CD4-positive, alpha-beta memory T cell (primary cell): ENCODE measurements at regions of chr3 and their contacts with region 1.

Region 1: DNA sequence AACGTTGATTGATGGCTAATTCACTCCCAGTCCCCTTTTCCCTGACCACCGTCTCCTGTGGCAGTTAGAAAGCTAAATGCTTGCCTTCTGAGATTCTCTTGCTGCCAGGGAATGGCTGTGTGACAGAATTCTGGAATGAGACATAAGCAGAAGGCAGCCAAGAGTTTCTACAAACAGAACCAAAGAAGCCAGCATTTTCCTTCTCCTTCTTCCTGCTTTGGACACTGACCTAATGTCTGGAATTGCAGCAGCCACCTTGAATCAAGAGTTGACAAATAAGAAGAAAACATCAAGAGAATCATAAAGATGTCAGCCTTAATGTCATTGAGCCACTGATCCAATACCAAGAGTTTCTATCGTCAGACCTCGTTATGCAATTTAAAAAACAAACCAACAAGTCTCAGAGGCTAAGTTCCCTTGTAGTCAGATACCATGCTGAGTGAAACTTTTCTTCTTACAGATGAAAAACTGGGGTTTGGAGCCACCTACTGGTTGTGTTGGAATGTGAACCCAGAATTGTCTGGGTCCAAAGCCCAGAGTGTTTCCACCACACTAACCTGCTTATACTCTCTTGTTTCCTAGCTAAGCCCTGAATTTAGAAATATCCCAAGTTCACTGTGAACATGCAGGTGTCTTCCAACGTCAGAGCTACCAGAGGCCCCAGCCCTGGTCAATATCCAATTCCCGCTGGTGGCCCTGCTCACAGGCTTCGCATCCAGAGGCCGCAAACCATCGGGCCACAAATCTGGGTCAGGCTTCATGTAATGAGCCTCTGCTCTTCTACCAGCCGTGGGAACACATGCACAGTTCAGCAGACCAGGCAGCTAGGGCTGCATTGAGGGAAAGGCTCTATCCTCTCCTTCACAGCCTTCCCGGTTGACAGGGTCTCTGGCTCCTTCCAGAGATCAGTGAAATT is 42.5 kb downstream of the MCF2L2 start:
- DNase-seq: peak; percentile 54 to 63 (median 55)
- H3K4me3 ChIP-seq: no peak overlapping the region
- H3K4me3 Mint-ChIP-seq: no peak overlapping the region
- H3K27ac ChIP-seq: no peak overlapping the region
- H3K27ac Mint-ChIP-seq: peak overlapping the region in 3 of 7 donors; percentile 6 to 83 (median 11)
- H3K4me1 ChIP-seq: no peaks in the 10 kb centered on the region
- H3K4me1 Mint-ChIP-seq: peaks cover 2 to 6% (median 4%) of the 10 kb centered on the region in 4 donors
- H3K27me3 ChIP-seq: no peaks in the 10 kb centered on the region
- H3K27me3 Mint-ChIP-seq: no peaks in the 10 kb centered on the region

Region 2: DNA sequence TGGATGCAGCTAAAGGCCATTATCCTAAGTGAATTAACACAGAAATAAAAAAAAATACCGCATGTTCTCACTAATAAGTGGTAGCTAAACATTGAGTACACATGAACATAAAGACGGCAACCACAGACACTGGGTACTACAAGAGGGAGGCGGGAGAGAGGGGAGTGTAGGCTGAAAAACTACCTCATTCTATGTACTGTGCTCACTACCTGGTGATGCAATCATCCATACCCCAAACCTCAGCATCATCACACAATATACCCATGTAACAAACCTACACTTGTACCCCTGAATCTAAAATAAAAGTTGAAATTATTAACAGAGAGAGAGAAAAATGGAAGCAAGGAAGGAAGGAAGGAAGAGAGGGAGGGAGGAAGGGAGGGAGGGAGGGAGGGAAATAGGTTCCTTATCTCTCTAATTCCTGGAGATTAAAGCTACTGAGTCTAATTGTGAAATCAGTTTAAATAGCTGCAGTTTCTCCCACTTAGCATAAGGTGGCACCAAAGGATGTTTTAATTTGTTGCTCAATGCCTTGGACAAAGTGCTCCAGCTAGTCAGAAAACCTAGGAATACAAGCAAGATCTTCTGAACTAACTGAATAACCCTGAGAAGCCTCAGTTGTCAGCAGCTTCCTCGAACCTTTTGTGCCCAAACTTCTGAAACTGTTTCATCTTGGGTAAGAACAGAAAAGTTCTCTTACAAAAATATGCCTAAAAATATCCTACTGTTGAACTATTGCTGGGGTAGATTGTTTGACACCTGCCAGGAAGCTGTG is 672.0 kb before region 1 on chr3:
- CTCF ChIA-PET with region 1: interaction called, 12 read pairs
- POLR2A ChIA-PET with region 1: no interaction called
- intact Hi-C with region 1: loop called (anchors 1 kb)
- DNase-seq: peak in 4 of 5 donors; percentile 25 to 41 (median 28)
- H3K4me3 ChIP-seq: no peak overlapping the region
- H3K4me3 Mint-ChIP-seq: no peak overlapping the region
- H3K27ac ChIP-seq: no peak overlapping the region
- H3K27ac Mint-ChIP-seq: no peak overlapping the region
- H3K4me1 ChIP-seq: no peaks in the 10 kb centered on the region
- H3K4me1 Mint-ChIP-seq: peaks cover 0 to 2% (median under 1%) of the 10 kb centered on the region in 4 donors
- H3K27me3 ChIP-seq: no peaks in the 10 kb centered on the region
- H3K27me3 Mint-ChIP-seq: no peaks in the 10 kb centered on the region

Region 3: GRCh38 chr3:183122257-183122932 is 263.6 kb before region 1 on chr3:
- CTCF ChIA-PET with region 1: interaction called, 163 read pairs
- POLR2A ChIA-PET with region 1: interaction called, 3 read pairs
- intact Hi-C with region 1: loop called (anchors 1 kb)
- DNase-seq: peak in 4 of 5 donors; percentile 53 to 55 (median 54)
- H3K4me3 ChIP-seq: no peak overlapping the region
- H3K4me3 Mint-ChIP-seq: no peak overlapping the region
- H3K27ac ChIP-seq: no peak overlapping the region
- H3K27ac Mint-ChIP-seq: no peak overlapping the region
- H3K4me1 ChIP-seq: no peaks in the 10 kb centered on the region
- H3K4me1 Mint-ChIP-seq: no peaks in the 10 kb centered on the region
- H3K27me3 ChIP-seq: no peaks in the 10 kb centered on the region
- H3K27me3 Mint-ChIP-seq: peaks cover 0 to 2% of the 10 kb centered on the region in 2 donors

Region 4: DNA sequence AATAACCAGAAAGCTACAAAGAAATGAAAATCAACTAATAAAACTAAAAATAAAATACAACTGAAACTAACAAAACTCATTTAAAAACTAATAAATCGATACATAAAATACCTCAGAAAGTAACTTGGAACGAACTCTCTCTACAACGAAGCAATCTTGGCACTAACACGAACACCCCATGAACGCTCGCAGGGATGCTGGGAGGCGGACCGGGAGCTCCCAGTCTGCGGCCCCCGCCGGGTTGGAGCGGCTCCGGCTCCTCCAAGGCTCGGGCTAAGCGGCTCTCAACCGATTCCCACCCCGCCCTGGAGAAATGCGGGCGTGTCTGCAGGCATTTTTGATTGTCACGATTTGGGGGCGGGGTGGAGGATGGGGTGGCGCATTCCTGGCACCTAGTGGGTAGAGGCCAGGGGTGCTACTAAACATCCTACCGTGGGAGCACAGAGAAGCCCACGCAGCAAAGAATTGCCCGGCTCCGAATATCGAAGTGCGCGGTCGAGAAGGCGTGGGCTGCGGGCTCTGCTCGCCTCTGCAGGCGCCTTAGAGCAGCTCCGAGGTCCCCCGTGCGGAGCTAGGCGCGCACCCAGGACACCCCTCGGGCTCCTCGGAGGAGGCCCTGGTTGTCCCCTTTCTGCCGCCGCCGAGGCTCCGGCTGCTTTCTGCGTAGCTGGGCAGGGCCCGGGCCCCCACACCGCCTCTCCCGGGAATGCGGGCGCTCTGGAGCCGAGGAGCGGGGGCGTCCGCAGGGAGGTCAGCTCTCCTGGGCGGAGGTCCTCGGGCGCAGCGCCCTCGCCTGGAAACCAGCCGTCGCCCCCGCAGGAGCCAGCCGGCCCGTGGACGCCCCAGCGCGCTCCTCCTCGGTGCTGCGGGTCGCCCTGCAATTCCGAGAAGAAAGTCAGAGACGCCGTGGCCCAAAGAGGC is 207.1 kb before region 1 on chr3:
- CTCF ChIA-PET with region 1: interaction called, 97 read pairs
- POLR2A ChIA-PET with region 1: no interaction called
- intact Hi-C with region 1: loop called (anchors 1 kb)
- DNase-seq: peak; percentile 16 to 49 (median 23)
- H3K4me3 ChIP-seq: peak overlapping the region in 1 of 2 donors; percentile 45
- H3K4me3 Mint-ChIP-seq: peak overlapping the region; percentile 65 to 85 (median 80)
- H3K27ac ChIP-seq: no peak overlapping the region
- H3K27ac Mint-ChIP-seq: peak overlapping the region in 1 of 7 donors; percentile 29
- H3K4me1 ChIP-seq: peaks cover 15% of the 10 kb centered on the region
- H3K4me1 Mint-ChIP-seq: peaks cover 0 to 5% (median 5%) of the 10 kb centered on the region in 4 donors
- H3K27me3 ChIP-seq: peaks cover 10% of the 10 kb centered on the region
- H3K27me3 Mint-ChIP-seq: peaks cover 10 to 22% of the 10 kb centered on the region in 2 donors

Region 5: DNA sequence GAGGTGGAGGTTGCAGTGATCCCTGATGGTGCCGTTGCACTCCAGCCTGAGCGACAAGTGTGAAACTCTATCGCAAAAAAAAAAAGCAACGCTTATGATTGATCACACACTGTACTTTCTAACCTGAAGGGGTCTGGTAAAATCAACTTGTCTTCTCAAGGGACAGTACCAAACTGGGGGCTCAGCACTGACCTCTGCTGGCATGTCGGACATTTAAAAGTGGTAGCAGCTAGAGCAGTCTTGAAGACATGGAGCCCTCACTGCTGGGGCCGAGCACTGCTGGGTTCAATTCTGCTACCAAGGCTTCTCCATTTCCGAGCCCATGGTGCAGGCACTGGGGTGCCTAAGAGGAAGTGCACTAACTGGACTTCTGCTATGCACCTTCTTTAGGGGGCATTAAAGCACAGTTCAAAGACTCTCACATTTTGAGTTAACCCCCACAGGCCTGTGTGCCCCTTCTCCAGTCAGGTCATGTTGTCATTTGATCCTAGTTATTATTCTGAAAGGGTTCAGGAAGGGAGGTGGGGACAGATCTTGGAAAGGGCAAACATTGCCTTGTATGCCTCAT is 197.0 kb before region 1 on chr3:
- CTCF ChIA-PET with region 1: interaction called, 97 read pairs
- POLR2A ChIA-PET with region 1: no interaction called
- intact Hi-C with region 1: loop called (anchors 1 kb)
- DNase-seq: no peak
- H3K4me3 ChIP-seq: no peak overlapping the region
- H3K4me3 Mint-ChIP-seq: no peak overlapping the region
- H3K27ac ChIP-seq: no peak overlapping the region
- H3K27ac Mint-ChIP-seq: peak overlapping the region in 1 of 7 donors; percentile 42
- H3K4me1 ChIP-seq: no peaks in the 10 kb centered on the region
- H3K4me1 Mint-ChIP-seq: no peaks in the 10 kb centered on the region
- H3K27me3 ChIP-seq: no peaks in the 10 kb centered on the region
- H3K27me3 Mint-ChIP-seq: no peaks in the 10 kb centered on the region

Region 6: GRCh38 chr3:183303690-183304089 is 82.3 kb before region 1 on chr3:
- CTCF ChIA-PET with region 1: no interaction called
- POLR2A ChIA-PET with region 1: no interaction called
- intact Hi-C with region 1: no loop called
- DNase-seq: no peak
- H3K4me3 ChIP-seq: no peak overlapping the region
- H3K4me3 Mint-ChIP-seq: no peak overlapping the region
- H3K27ac ChIP-seq: no peak overlapping the region
- H3K27ac Mint-ChIP-seq: peak overlapping the region in 2 of 7 donors; percentile 46 to 58
- H3K4me1 ChIP-seq: no peaks in the 10 kb centered on the region
- H3K4me1 Mint-ChIP-seq: peaks cover 0 to 2% (median 0%) of the 10 kb centered on the region in 4 donors
- H3K27me3 ChIP-seq: no peaks in the 10 kb centered on the region
- H3K27me3 Mint-ChIP-seq: no peaks in the 10 kb centered on the region

Region 7: DNA sequence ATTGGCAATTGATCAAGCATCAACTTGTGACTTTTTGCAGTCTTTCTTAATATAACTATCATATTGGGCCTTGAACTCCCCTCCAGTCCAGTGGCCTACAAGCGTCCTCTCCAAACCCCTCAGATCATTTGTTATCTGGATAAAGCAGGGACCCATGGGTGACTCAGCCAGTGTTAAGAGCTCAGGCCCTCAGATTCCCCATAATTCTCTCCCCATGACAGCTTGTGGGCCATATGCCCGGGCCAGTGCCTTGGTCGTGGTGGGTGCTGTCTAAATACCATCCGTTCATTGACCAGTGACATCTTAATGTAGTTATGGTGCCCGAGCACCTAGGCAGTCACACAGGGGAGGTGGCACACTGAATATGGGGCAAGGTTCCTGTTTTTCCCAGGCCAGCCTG is 24.3 kb after region 1 on chr3:
- CTCF ChIA-PET with region 1: interaction called, 12 read pairs
- POLR2A ChIA-PET with region 1: no interaction called
- intact Hi-C with region 1: no loop called
- DNase-seq: no peak
- H3K4me3 ChIP-seq: no peak overlapping the region
- H3K4me3 Mint-ChIP-seq: no peak overlapping the region
- H3K27ac ChIP-seq: no peak overlapping the region
- H3K27ac Mint-ChIP-seq: peak overlapping the region in 1 of 7 donors; percentile 42
- H3K4me1 ChIP-seq: peaks cover 7% of the 10 kb centered on the region
- H3K4me1 Mint-ChIP-seq: peaks cover 0 to 7% (median under 1%) of the 10 kb centered on the region in 4 donors
- H3K27me3 ChIP-seq: no peaks in the 10 kb centered on the region
- H3K27me3 Mint-ChIP-seq: no peaks in the 10 kb centered on the region